Natural killer cell (primary cell): ENCODE measurements at regions of chr18 and their contacts with region 1.

Region 1: GRCh38 chr18:3771121-3771971 is 321.4 kb downstream of the TGIF1 start:
- DNase-seq: peak; percentile 68 to 76
- ATAC-seq: peak; percentile 98 to 99 (median 99)
- H3K4me3 ChIP-seq: no peak overlapping the region
- H3K4me3 Mint-ChIP-seq: peak overlapping the region; percentile 56
- H3K27ac ChIP-seq: no peak overlapping the region
- H3K27ac Mint-ChIP-seq: peak overlapping the region in 1 of 2 donors; percentile 29
- H3K4me1 ChIP-seq: peaks cover 9% of the 10 kb centered on the region
- H3K4me1 Mint-ChIP-seq: peaks cover 11 to 15% of the 10 kb centered on the region in 2 donors
- H3K27me3 ChIP-seq: peaks cover 11% of the 10 kb centered on the region
- H3K27me3 Mint-ChIP-seq: peaks cover 31 to 52% of the 10 kb centered on the region in 2 donors
- CTCF ChIP-seq: peak; percentile 72

Region 2: GRCh38 chr18:3612315-3612714 is 159.0 kb before region 1 on chr18:
- intact Hi-C with region 1: no loop called
- DNase-seq: no peak
- ATAC-seq: no peak
- H3K4me3 ChIP-seq: no peak overlapping the region
- H3K4me3 Mint-ChIP-seq: no peak overlapping the region
- H3K27ac ChIP-seq: no peak overlapping the region
- H3K27ac Mint-ChIP-seq: no peak overlapping the region
- H3K4me1 ChIP-seq: no peaks in the 10 kb centered on the region
- H3K4me1 Mint-ChIP-seq: no peaks in the 10 kb centered on the region
- H3K27me3 ChIP-seq: no peaks in the 10 kb centered on the region
- H3K27me3 Mint-ChIP-seq: no peaks in the 10 kb centered on the region
- CTCF ChIP-seq: no peak

Region 3: GRCh38 chr18:3675446-3675845 is 95.9 kb before region 1 on chr18:
- intact Hi-C with region 1: no loop called
- DNase-seq: no peak
- ATAC-seq: no peak
- H3K4me3 ChIP-seq: no peak overlapping the region
- H3K4me3 Mint-ChIP-seq: no peak overlapping the region
- H3K27ac ChIP-seq: no peak overlapping the region
- H3K27ac Mint-ChIP-seq: no peak overlapping the region
- H3K4me1 ChIP-seq: no peaks in the 10 kb centered on the region
- H3K4me1 Mint-ChIP-seq: no peaks in the 10 kb centered on the region
- H3K27me3 ChIP-seq: no peaks in the 10 kb centered on the region
- H3K27me3 Mint-ChIP-seq: peaks cover 24% of the 10 kb centered on the region in 2 donors
- CTCF ChIP-seq: no peak

Region 4: DNA sequence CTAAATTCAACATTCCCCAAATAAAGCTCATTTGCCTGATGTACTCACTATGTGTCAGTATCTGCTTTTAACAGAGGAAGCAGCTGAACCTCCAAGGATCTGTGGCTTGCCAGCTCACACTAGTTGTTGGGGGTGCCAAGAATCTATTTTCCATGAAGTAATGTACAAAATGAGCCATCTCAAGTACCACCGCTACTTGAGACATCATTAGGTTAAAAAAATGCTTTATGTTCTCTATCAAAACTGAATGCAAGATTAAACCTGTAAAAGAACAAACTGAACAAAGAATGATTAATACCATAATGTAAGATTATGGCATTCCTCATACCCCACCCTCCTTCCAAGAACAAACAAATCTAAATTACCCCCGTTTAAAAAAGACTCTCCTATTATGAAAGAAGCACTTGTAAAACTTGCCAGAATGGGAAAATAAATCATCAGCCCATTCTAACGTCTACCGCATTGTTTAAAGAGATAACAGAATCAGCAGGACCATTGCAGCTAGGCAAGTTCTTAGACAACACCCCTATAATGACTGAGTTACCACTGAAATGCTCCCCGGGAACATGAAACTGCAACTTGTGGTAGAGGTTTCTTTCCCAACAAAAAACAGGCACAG is 212.1 kb after region 1 on chr18:
- intact Hi-C with region 1: no loop called
- DNase-seq: no peak
- ATAC-seq: no peak
- H3K4me3 ChIP-seq: no peak overlapping the region
- H3K4me3 Mint-ChIP-seq: no peak overlapping the region
- H3K27ac ChIP-seq: no peak overlapping the region
- H3K27ac Mint-ChIP-seq: no peak overlapping the region
- H3K4me1 ChIP-seq: no peaks in the 10 kb centered on the region
- H3K4me1 Mint-ChIP-seq: peaks cover 6 to 11% of the 10 kb centered on the region in 2 donors
- H3K27me3 ChIP-seq: no peaks in the 10 kb centered on the region
- H3K27me3 Mint-ChIP-seq: peaks cover 0 to 2% of the 10 kb centered on the region in 2 donors
- CTCF ChIP-seq: no peak

Region 5: DNA sequence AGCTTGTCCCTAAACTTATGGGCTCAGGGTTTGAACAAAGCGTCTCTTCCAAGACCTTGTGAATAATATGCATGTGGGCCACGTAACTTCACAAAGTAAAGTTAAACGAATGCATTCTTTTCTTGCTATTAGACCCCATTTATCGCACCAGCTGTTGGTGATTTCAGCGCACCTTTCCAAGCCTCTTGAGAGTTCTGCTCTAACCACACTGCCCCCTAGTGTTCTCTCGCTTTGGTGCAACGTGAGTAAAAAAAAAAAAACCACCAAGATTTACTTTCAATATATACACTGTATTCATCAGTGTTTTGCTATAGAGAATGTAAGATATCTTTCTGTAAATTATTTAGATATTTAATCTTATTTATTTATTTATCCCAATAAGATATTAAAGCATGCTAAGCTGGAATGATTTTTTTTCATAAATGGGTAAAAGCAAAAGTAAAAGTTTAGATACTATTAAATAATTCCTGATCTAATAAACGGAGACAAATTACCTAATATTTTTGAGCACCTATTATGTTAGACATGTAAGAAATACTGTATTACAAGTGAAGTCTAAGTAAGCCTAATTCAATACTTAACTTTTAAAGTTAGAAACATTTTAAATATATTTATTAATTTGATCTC is 224.2 kb after region 1 on chr18:
- intact Hi-C with region 1: loop called (anchors 2 kb)
- DNase-seq: peak in 1 of 2 donors; percentile 79
- ATAC-seq: peak; percentile 57 to 86 (median 66)
- H3K4me3 ChIP-seq: no peak overlapping the region
- H3K4me3 Mint-ChIP-seq: no peak overlapping the region
- H3K27ac ChIP-seq: no peak overlapping the region
- H3K27ac Mint-ChIP-seq: no peak overlapping the region
- H3K4me1 ChIP-seq: no peaks in the 10 kb centered on the region
- H3K4me1 Mint-ChIP-seq: no peaks in the 10 kb centered on the region
- H3K27me3 ChIP-seq: no peaks in the 10 kb centered on the region
- H3K27me3 Mint-ChIP-seq: no peaks in the 10 kb centered on the region
- CTCF ChIP-seq: peak; percentile 73

Region 6: DNA sequence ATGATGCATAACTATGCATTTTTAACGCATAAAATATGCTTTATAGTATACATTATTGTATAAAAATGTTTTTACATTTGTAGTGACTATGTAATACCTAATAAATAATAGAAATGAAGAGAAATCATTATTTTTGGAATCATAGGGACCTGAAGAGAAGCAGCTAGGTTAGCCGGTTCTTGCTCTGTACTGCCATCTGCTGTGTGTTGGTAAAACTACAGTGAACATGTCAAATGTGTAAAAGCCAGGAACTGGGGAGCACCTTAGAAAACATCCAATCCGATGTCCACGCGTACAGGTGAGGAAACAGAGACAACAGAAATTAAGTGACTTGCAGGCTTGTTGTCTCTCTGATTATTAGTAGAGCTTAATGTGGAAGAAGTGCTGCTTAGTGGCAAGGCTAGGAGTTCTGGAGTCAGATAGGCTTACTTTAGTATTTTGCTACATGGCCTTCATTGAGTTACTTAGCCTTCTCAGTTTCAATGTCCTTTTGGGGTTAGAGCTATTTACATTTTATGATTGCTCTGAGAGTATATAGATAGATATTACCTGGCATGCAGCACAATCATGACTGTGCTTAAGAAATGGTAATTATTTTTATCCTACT is 297.3 kb after region 1 on chr18:
- intact Hi-C with region 1: loop called (anchors 5 kb)
- DNase-seq: peak in 1 of 2 donors; percentile 54
- ATAC-seq: peak in 2 of 3 donors; percentile 39 to 65
- H3K4me3 ChIP-seq: no peak overlapping the region
- H3K4me3 Mint-ChIP-seq: no peak overlapping the region
- H3K27ac ChIP-seq: no peak overlapping the region
- H3K27ac Mint-ChIP-seq: no peak overlapping the region
- H3K4me1 ChIP-seq: no peaks in the 10 kb centered on the region
- H3K4me1 Mint-ChIP-seq: no peaks in the 10 kb centered on the region
- H3K27me3 ChIP-seq: no peaks in the 10 kb centered on the region
- H3K27me3 Mint-ChIP-seq: peaks cover 4 to 6% of the 10 kb centered on the region in 2 donors
- CTCF ChIP-seq: peak; percentile 54